HCT116 (cell line): ENCODE measurements at regions of chr10 and their contacts with region 1.

Region 1: GRCh38 chr10:63465293-63466143 is at the start of gene JMJD1C:
- DNase-seq: peak; percentile 72
- ATAC-seq: peak; percentile 82
- H3K4me3 ChIP-seq: peak within 1 kb of the TSS; percentile 78 to 88
- H3K27ac ChIP-seq: peak within 1 kb of the TSS; percentile 79
- H3K4me1 ChIP-seq: peaks cover 10 to 24% of the 10 kb centered on the region in 2 experiments; a peak in 3 of 4 replicates
- H3K27me3 ChIP-seq: no peaks in the 10 kb centered on the region
- CTCF ChIP-seq: no peak
- POLR2A ChIP-seq: peak; percentile 30
- RAD21 ChIP-seq: peak; percentile 26; the same call in 1 of the 2 replicates
- total RNA-seq, gene JMJD1C: 66.3 TPM

Region 2: GRCh38 chr10:62653254-62653653 is 812.3 kb before region 1 on chr10:
- CTCF ChIA-PET with region 1: no interaction called
- POLR2A ChIA-PET with region 1: no interaction called
- RAD21 ChIA-PET with region 1: no interaction called
- intact Hi-C with region 1: no loop called
- DNase-seq: no peak
- ATAC-seq: no peak
- H3K4me3 ChIP-seq: no peak overlapping the region
- H3K27ac ChIP-seq: no peak overlapping the region
- H3K4me1 ChIP-seq: no peaks in the 10 kb centered on the region
- H3K27me3 ChIP-seq: no peaks in the 10 kb centered on the region
- CTCF ChIP-seq: no peak
- POLR2A ChIP-seq: no peak
- RAD21 ChIP-seq: no peak

Region 3: GRCh38 chr10:63217120-63217605 is 248.4 kb before region 1 on chr10:
- CTCF ChIA-PET with region 1: no interaction called
- POLR2A ChIA-PET with region 1: no interaction called
- RAD21 ChIA-PET with region 1: no interaction called
- intact Hi-C with region 1: loop called (anchors 1 kb)
- DNase-seq: peak; percentile 27
- ATAC-seq: peak; percentile 94
- H3K4me3 ChIP-seq: no peak overlapping the region
- H3K27ac ChIP-seq: no peak overlapping the region
- H3K4me1 ChIP-seq: 0 out of 4 replicates have a peak, but pooled peaks cover 0 to 4% of the 10 kb centered on the region in 2 experiments
- H3K27me3 ChIP-seq: no peaks in the 10 kb centered on the region
- CTCF ChIP-seq: peak; percentile 53 to 69 (median 67)
- POLR2A ChIP-seq: no peak
- RAD21 ChIP-seq: peak; percentile 78

Region 4: DNA sequence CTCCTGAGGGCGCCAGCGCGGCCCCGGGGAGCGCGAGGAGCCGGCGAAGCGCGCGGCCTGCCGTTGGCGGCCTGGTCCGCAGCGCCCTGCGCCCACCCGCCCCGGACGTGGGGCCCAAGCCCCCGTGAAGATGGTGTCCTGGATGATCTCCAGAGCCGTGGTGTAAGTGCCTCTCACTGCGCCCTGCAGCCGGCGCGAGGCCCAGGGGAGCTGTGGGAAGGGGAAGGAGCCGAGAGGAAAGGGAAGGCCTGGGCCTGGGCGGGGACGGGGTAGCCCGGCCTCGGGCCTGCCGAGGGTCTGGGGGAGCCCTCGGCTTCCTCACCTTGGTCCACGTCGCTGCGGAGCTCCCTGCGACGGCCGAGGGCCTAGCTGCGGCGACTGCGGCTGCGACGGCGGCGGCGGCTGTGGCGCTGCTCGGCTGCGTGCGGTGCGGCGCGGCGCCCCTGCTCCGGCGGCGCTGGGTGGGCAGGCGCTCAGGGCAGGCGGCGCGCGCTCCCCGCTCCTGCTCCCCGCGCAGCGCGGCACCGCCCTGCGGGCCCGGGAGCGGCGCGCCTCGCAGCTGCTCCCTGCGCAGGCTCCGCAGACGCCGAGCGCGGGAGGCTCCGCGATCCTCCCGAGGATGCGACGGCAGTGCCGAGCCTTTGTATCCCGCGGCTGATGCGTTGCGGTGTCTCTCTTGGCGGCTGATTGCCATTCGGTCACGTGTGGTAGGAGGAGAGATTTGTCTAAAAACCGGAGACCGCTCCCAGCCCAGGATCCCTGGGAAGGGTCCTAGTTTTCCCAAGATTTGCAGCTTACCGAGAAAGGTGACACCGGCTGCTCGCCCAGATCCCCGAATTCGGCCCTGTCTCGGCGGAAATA is 56.1 kb after region 1 on chr10:
- CTCF ChIA-PET with region 1: no interaction called
- POLR2A ChIA-PET with region 1: no interaction called
- RAD21 ChIA-PET with region 1: no interaction called
- intact Hi-C with region 1: loop called (anchors 2 kb)
- DNase-seq: no peak
- ATAC-seq: peak; percentile 74
- H3K4me3 ChIP-seq: peak overlapping the region; percentile 55 to 65
- H3K27ac ChIP-seq: peak overlapping the region; percentile 99
- H3K4me1 ChIP-seq: peaks cover 19 to 32% of the 10 kb centered on the region in 2 experiments; a peak in 3 of 4 replicates
- H3K27me3 ChIP-seq: no peaks in the 10 kb centered on the region
- CTCF ChIP-seq: no peak
- POLR2A ChIP-seq: peak; percentile 32
- RAD21 ChIP-seq: 0 out of 2 replicates have a peak, but pooled peaks have one; percentile 17